Adrenal gland (tissue), 19 donors: ENCODE measurements at regions of chr9 and their contacts with region 1.

Region 1: GRCh38 chr9:76704593-76705204 is 59.5 kb upstream of the PCA3 start:
- DNase-seq: peak in 3 of 7 donors; percentile 14 to 37 (median 37)
- H3K4me3 ChIP-seq: no peak overlapping the region
- H3K27ac ChIP-seq: no peak overlapping the region
- H3K4me1 ChIP-seq: peaks cover 0 to 3% of the 10 kb centered on the region in 2 donors
- H3K27me3 ChIP-seq: no peaks in the 10 kb centered on the region
- CTCF ChIP-seq: peak; percentile 50 to 88 (median 78)
- POLR2A ChIP-seq: no peak

Region 2: DNA sequence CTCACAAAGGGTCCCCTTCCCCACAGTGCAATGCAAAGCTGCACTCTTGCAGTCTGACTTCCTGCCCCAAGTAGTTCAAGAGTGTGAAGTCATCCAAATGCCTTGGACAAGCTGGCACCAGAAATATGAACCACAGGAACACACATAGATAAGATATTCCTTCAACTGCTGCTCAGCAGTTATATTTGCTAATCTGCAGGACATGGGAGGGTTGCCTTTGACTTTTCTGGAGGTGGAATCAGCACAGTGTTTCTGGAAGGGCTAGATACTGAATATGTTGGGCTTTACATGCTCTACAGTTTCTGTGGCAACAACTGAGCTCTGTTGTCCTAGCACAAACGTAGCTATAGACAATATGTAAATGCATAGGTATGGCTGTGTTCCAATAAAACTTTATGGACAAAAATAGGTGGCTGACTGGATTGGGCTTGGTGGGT is 37.2 kb before region 1 on chr9:
- intact Hi-C with region 1: loop called in 1 of 2 experiments (anchors 5 kb)
- DNase-seq: no peak
- H3K4me3 ChIP-seq: no peak overlapping the region
- H3K27ac ChIP-seq: no peak overlapping the region
- H3K4me1 ChIP-seq: no peaks in the 10 kb centered on the region
- H3K27me3 ChIP-seq: no peaks in the 10 kb centered on the region
- CTCF ChIP-seq: no peak
- POLR2A ChIP-seq: no peak